PC-9 (cell line): ENCODE measurements at regions of chr15 and their contacts with region 1.

Region 1: DNA sequence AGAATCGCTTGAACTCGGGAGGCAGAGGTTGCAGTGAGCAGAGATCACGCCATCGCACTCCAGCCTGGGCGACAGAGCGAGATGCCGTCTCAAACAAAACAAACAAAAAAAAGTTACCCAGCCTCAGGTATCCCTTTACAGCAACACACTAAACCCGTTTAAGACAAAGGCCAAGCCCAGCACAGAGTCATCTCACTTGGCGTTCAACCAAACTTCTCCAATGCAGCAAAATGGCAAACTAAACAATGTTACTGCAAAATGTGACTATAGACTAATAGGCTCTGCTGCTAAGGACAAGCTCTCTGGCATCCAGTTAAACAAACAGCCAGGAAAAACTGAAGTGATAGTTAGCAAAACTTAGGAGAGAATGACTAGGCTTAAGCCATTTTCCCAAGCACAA is 6.4 kb upstream of the FAM219B start:
- DNase-seq: peak in 1 of 2 experiments; percentile 53
- H3K4me3 ChIP-seq: no peak overlapping the region
- H3K27ac ChIP-seq: no peak overlapping the region
- H3K4me1 ChIP-seq: no peaks in the 10 kb centered on the region
- H3K27me3 ChIP-seq: no peaks in the 10 kb centered on the region
- CTCF ChIP-seq: no peak

Region 2: GRCh38 chr15:74653426-74654123 is 259.5 kb before region 1 on chr15:
- CTCF ChIA-PET with region 1: no interaction called
- POLR2A ChIA-PET with region 1: no interaction called
- intact Hi-C with region 1: no loop called
- DNase-seq: peak; percentile 55 to 73
- H3K4me3 ChIP-seq: no peak overlapping the region
- H3K27ac ChIP-seq: peak overlapping the region; percentile 9; the same call in 1 of the 2 replicates
- H3K4me1 ChIP-seq: no peaks in the 10 kb centered on the region
- H3K27me3 ChIP-seq: no peaks in the 10 kb centered on the region
- CTCF ChIP-seq: no peak

Region 3: DNA sequence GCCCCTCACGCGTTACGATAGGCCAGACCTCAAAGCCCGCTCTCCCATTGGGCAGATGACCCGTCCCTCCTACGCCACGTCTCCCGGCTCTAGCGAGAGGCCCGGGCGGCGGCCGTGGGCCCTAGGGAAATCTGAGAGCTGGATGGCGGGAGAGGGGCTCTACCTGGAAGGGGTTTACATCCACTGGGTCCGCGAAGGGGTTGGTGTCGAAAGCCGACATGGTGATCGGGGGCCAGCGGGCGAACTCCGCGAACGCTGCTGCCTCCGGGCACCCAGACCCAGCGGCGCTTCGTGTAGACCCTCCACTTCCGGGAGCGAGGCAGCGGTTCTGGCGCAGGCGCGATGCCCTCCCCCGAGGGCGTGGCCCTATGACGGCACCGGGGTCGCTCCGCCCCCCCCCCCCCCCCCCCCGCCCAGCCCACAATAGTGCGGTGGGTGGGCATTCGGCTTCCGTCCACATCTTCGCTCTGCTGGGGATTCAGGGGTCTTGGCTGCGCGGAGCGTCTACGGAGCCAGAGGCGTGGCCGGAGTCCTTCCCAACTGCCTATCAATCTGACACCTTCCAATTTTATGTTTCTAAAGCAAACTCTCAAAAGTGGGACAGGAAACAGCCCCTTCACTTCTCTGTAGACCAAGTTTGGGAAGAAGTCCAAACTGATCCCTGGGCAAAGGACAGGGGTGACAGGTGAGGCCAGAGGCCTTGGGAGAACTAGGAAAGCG is 39.8 kb before region 1 on chr15 and contains the start of gene SCAMP2:
- CTCF ChIA-PET with region 1: interaction called, 10 read pairs
- POLR2A ChIA-PET with region 1: no interaction called
- intact Hi-C with region 1: no loop called
- DNase-seq: peak; percentile 85 to 89
- H3K4me3 ChIP-seq: peak within 1 kb of the TSS; percentile 98
- H3K27ac ChIP-seq: peak within 1 kb of the TSS; percentile 83
- H3K4me1 ChIP-seq: peaks cover 39% of the 10 kb centered on the region
- H3K27me3 ChIP-seq: no peaks in the 10 kb centered on the region
- CTCF ChIP-seq: no peak
- total RNA-seq, gene SCAMP2: 84.6 and 87.4 TPM in 2 replicates